SK-N-SH (cell line): ENCODE measurements at regions of chr4 and their contacts with region 1.

Region 1: GRCh38 chr4:141294306-141294705 is 73.6 kb downstream of the ZNF330 start:
- DNase-seq: no peak
- H3K4me3 ChIP-seq: no peak overlapping the region
- H3K27ac ChIP-seq: no peak overlapping the region
- H3K4me1 ChIP-seq: no peaks in the 10 kb centered on the region
- H3K27me3 ChIP-seq: no peaks in the 10 kb centered on the region
- CTCF ChIP-seq: no peak
- EP300 ChIP-seq: no peak
- RAD21 ChIP-seq: no peak

Region 2: GRCh38 chr4:141307241-141307689 is 13.0 kb after region 1 on chr4:
- CTCF ChIA-PET with region 1: interaction called, 17 read pairs
- POLR2A ChIA-PET with region 1: no interaction called
- DNase-seq: peak; percentile 63
- H3K4me3 ChIP-seq: no peak overlapping the region
- H3K27ac ChIP-seq: no peak overlapping the region
- H3K4me1 ChIP-seq: peaks cover 0 to 3% of the 10 kb centered on the region in 2 experiments; a peak in 1 of 4 replicates
- H3K27me3 ChIP-seq: no peaks in the 10 kb centered on the region
- CTCF ChIP-seq: peak; percentile 73
- EP300 ChIP-seq: no peak
- RAD21 ChIP-seq: peak; percentile 87